ENCODE measurements at regions of chr1 and their contacts with region 1.

Region 1: DNA sequence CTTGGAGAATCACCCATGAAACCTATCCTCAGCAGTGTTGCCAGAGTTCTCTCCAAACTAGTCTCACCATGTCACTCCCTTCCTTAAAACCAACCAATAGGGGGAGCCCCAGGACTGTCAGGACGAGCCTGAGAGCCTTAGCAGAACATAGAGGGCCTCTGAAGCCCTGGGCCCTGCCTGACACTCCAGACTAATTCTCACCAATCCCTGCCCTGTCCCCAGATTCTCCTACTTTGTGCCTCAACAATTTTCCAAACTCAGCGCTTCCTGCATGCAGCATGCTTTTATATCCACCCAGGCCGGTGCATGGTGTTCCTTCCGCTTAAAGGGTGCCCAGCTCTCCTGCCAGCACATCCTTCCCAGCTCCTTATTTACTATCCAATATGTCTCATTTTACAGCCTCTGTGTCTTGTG is 42.7 kb downstream of the HSD3B1 start:
- DNase-seq: no peak
- H3K4me3 ChIP-seq: no peak overlapping the region
- H3K27ac ChIP-seq: no peak overlapping the region
- H3K4me1 ChIP-seq: peaks cover 7% of the 10 kb centered on the region
- H3K27me3 ChIP-seq: no peaks in the 10 kb centered on the region
- CTCF ChIP-seq: peak; percentile 65

Region 2: DNA sequence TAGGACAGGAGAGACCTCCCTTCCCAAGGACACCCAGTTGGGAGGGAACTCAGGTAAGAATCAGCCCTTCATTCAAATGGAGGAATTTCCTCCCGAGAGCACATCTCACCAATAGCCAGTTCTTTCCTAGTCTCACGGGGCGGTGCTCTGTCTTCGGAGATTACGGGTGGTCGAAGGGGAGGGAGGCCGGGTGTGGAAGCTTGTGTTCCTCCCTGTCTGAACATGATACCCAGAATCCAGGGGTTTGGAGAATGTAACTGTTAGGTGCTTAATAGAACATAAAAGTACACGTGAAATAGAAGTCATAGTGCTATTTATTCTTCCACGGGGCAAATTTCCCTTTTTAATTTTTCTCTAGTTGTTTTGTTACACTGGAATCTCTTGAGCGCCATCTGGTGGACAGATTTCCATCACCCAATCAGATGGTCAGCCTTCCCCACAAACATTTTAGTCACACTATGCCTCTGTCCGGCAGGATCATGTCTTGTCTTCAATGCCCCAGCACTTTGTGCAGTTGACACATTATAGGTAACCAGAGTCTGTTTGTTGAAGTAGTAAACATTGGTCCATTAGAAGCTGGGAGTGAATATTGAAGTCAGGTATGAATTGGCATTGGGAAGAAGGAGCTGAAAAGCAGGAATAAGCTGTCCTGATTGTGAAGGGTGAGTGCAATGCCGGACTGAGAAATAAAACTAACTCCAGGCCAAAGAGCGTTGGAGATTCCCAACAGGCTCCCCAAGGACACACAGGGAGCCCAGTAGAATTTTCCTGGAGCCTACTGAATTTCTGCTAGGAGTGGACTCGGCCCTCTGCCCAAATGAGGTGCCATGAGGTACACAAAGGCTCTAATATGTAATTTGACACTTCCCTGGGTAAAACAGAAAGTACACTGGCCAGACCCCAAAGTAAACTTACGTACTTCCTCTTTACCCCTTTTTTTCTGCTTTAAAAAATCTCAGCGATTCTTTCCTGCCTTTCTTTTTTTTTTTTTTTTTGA is 125.9 kb after region 1 on chr1:
- intact Hi-C with region 1: loop called (anchors 10 kb)
- DNase-seq: peak; percentile 38
- H3K4me3 ChIP-seq: peak overlapping the region; percentile 54
- H3K27ac ChIP-seq: peak overlapping the region; percentile 39
- H3K4me1 ChIP-seq: peaks cover 11% of the 10 kb centered on the region
- H3K27me3 ChIP-seq: no peaks in the 10 kb centered on the region
- CTCF ChIP-seq: peak; percentile 93